ENCODE measurements at regions of chr11 and their contacts with region 1.

Region 1: DNA sequence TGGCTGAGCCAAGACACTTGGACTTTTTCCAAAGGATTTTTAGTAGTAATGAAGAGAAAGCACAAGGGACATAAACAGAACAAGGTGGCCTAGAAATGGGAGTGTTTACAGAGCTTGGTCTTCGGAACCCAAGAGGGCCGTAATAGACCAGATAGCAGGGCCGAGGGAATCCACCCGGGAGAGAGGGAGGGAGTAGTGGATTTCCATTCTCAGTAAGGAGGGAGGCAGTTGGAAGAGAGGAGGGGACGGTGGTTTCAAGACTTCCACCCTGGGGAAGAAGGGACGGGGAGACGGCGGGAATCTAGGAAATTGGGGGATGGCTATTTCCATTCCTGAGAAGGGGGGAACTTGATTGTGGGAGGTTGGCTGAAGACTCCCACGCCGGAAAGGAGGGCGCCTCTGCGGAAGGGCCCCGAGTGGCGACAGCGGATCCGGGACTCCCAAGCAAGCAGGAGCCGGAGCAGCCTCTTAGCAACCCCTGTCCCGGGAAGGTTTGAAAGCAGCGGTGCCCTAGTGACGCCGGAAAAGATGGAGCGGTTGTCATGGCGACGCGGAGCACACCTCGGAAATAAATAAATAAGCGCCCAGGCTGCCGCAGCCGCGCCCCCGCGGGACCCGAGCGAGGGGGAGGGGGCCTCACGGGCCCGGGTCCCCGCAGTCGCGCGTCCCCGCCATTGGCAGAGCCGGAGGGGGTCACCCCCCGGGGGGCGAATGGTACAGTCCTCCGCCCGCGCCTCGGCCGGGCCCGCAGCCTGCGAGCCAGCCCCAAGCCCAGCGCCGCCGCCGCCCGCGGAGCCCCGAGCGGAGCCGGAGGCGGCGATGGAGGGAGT is 31.6 kb downstream of the EIF3F start:
- DNase-seq: peak; percentile 93
- H3K4me3 ChIP-seq: peak overlapping the region; percentile 62 to 72
- H3K27ac ChIP-seq: peak overlapping the region in 1 of 2 experiments; percentile 38; a peak in 2 of 4 replicates
- H3K4me1 ChIP-seq: peaks cover 10 to 16% of the 10 kb centered on the region in 2 experiments; a peak in 3 of 4 replicates
- H3K27me3 ChIP-seq: no peaks in the 10 kb centered on the region
- CTCF ChIP-seq: no peak
- EP300 ChIP-seq: no peak
- RAD21 ChIP-seq: no peak

Region 2: DNA sequence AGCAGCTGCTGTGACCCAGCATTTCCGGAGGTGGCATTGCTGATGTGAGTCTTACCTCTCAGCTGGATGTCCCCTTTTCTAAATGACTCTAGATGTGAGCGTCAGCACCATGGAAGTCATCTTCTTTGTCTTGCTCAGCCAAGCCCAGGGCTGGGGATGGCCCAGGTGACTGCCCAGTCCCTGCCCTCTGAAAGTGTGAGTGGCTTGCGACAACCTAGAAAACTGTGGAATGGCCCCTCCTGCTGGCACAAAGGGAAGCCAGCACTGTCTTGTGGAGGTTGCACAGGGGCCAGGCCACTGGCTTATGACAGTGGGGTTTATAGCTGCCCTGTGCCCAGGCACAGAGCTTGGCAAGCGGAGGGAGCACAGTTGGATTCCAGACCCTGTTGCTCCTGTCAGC is 68.5 kb after region 1 on chr11:
- CTCF ChIA-PET with region 1: interaction called, 83 read pairs
- POLR2A ChIA-PET with region 1: interaction called, 4 read pairs
- DNase-seq: no peak
- H3K4me3 ChIP-seq: no peak overlapping the region
- H3K27ac ChIP-seq: peak overlapping the region in 1 of 2 experiments; percentile 92; a peak in 2 of 4 replicates
- H3K4me1 ChIP-seq: peaks cover 12 to 92% of the 10 kb centered on the region in 2 experiments; a peak in 3 of 4 replicates
- H3K27me3 ChIP-seq: no peaks in the 10 kb centered on the region
- CTCF ChIP-seq: peak; percentile 38; the same call in 1 of the 2 replicates
- EP300 ChIP-seq: no peak
- RAD21 ChIP-seq: peak; percentile 47